GM10248 (cell line): ENCODE measurements at regions of chr1 and their contacts with region 1.

Region 1: DNA sequence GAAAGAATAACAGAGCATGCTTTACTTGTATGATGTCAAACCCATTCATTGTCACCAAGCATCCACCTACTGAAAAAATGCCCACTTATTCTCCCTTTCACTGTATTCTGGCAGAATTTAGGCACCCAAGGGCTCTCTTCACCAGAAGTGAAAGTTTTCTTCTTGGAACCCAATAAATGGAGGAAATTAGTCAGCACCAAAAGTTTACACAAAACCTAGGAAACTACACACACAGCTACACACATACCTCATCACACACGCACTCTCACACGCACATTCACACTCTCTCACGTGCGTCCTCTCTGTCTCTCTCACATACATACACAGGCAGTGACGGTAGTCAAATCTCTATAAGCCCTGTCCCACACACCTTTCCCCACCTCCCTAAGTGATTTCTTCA is 37.6 kb downstream of the MCOLN2 start:
- DNase-seq: no peak
- CTCF ChIP-seq: no peak

Region 2: DNA sequence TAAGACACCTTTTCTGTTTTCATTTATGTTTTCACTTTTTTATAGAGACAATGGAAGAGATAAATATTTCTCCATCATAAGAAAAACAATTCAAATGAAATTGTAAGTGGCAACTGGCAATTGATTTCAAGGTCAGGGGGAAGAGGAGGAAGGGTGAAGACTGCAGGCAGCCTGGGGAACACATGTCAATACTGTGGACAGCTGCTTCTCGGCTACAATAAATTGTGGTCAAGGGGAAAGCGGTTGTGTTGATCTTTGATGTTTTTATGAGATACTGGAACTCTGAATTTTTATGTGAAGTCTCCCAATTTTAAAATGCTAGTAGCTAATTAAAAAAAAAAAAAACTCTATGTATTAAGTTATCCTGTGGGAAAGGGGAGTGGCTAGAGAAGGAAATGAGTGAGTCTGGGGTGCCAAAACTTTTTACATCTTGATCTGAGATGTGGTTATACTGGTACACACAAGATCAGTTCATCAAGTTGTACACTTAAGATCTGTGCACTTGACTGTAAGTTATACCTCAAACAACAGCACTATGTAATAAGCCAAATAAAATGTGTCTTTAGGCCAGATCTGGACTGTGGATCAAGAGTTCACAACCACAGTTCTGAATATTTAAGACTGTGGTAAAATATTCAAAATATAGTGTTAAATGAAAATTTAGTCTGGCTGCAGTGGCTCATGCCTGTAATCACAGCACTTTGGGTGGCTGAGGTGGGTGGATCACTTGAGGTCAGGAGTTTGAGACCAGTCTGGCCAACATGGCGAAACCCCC is 287.0 kb before region 1 on chr1:
- CTCF ChIA-PET with region 1: no interaction called
- POLR2A ChIA-PET with region 1: no interaction called
- DNase-seq: no peak
- CTCF ChIP-seq: no peak

Region 3: DNA sequence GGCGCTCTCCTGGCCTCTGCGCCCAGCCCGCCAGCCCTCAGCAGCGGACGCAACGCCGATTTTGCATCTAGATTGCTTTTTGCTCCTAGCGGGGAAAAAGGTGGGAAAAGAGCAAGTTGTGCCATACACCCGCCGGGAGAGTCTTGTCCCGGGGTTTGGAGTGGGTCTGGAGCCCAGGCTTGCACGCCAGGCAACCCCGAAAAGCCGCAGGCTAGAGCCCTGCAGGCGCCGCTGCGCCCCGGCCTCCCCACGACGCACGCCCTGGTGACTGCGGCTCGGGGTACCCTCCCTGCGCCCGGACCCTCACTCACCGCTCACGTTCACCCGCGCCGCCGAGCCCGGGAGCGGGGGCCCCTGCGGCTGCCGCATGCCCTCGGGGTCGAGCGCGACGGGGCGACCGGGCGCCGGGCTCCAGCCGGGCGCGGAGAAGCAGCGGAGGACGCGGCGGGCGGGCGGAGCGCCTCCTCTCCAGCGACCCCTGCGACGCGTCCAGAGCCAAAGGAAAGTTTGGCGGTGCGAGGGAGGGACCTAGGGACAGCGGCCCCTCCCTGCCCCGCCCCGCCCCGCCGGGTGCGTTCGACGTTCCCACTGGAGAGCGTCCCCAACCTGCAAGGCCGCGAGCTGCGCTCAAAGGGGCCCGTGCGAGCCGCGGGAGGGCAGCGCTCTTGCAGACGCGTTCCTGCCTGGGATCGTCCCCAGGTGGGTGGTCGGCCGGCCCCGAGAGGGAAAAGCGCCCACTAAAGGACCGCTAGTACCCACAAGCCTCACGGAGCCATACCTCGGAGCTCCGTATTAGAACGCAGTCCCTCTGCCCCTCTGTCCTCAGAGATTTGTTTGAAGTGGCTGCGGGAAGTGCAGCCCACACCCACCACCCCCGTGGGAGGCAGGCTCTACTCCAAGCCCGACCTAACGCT is 66.3 kb before region 1 on chr1 and contains the start of gene LPAR3:
- CTCF ChIA-PET with region 1: no interaction called
- POLR2A ChIA-PET with region 1: no interaction called
- DNase-seq: no peak
- CTCF ChIP-seq: no peak

Region 4: DNA sequence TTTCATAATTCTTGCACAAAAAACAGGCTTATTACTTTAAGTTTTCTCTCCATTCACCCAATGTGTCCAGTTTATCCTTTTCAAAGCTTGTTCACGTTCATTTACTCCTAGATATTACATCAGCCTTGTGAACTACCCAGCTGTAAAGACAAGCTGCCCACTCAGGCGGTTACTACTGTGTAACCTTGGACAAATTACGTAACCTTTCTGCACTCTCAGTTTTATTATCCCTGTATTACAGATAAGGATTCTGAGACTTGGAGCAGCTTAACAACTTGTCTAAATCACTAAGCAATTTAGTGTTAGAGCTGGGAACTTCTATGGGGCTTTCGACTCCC is 45.8 kb before region 1 on chr1:
- CTCF ChIA-PET with region 1: no interaction called
- POLR2A ChIA-PET with region 1: no interaction called
- DNase-seq: no peak
- CTCF ChIP-seq: no peak

Region 5: GRCh38 chr1:84973498-84974334 is 14.4 kb after region 1 on chr1:
- CTCF ChIA-PET with region 1: interaction called, 33 read pairs
- POLR2A ChIA-PET with region 1: interaction called, 5 read pairs
- DNase-seq: no peak
- CTCF ChIP-seq: peak; percentile 19

Region 6: DNA sequence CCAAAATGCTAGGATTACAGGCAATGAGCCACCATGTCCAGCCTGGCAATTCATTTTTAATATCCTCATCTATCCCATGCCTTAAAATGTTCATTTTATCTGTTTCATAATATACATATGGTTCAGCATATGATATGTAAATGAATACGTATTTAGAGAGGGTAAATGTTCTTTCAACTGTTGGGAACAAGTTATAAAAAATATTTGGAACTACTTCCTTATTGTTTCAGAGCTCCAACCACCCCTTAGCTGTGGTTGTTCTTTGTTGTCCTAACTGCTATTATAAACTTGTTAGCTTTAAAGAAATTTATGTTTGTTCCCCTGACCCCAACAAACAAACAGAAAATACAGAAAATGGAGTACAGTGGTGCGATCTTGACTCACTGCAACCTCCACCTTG is 23.1 kb after region 1 on chr1:
- CTCF ChIA-PET with region 1: interaction called, 10 read pairs
- POLR2A ChIA-PET with region 1: no interaction called
- DNase-seq: no peak
- CTCF ChIP-seq: no peak

Region 7: GRCh38 chr1:85027242-85027983 is 68.1 kb after region 1 on chr1:
- CTCF ChIA-PET with region 1: interaction called, 11 read pairs
- POLR2A ChIA-PET with region 1: no interaction called
- DNase-seq: peak; percentile 35
- CTCF ChIP-seq: peak; percentile 32